ENCODE measurements at regions of chr11 and their contacts with region 1.

Region 1: DNA sequence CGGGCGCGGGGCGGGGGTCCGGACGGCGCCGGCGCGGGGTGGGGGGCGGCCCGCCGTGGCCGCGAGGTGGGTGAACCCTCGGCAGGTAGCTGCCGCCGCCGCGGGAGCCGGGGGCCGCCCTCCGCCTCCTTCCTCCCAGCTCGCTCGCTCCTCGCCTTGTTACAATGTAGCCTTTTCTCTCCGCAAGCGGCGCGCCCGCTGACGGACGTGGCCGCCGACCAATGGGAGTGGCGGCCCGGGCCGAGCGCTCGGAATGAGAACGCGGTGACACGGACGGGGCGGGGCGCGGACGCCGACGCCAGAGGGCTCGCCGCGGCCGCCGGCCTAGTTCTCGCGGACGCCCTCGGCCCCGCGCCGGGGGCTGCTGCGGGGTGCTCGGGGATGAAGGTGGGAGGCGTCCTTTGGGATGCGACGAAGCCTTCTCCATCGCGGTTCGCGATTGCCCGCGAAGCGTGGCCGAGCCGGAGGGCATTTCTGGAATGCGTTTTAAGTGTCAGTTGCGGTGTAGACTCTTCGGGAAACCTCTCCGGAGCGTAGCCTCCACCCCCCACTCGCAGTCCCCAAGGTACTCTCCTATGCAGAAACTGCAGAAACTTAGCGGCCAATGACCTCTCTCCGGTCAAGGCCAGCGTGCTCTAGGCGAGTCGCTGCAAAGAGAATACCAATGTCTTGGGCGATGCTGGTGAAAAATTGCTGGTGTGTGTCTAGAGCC is 734 bp downstream of the PRDM11 start:
- DNase-seq: peak; percentile 85 to 97
- H3K4me3 ChIP-seq: peak overlapping the region; percentile 78
- H3K27ac ChIP-seq: peak overlapping the region; percentile 20; the same call in 1 of the 2 replicates
- H3K4me1 ChIP-seq: peaks cover 13% of the 10 kb centered on the region; the same call in 1 of the 2 replicates
- H3K27me3 ChIP-seq: peaks cover 15% of the 10 kb centered on the region; the same call in 1 of the 2 replicates
- CTCF ChIP-seq: no peak

Region 2: DNA sequence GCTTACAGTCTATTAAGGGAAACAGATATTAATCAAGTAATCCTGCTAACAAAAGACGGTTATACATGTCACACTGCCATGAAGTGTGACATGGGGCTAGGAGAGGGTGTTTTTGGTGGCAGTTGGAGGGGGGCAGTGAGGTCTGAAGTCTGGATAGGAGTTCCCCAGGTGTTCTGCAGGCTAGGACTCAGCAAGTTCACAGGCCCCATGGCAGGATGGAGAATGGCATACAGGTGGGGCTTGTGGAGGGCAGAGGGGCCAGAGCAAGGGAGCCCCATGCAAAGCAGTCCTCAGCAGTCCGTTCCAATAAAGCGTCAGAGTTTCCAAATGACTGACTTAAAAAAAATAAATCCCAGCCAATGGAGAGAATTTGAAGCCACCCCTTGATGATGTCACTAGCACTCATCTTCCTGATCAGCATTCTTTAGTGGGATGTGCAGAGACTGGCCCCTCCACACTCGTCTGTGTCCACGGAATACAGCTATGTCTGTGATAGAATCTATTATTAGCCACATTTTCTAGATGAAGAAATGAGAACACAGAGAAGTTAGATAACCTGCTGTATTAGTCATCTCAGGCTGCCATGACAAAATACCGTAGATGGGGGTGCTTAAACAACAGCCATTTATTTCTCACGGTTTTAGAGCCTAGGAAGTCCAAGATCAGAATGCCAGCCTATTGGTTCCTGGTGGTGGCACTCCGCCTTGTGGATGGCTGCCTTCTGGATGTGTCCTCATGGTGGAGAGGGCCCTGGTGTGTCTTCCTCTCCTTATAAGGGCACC is 31.9 kb after region 1 on chr11:
- CTCF ChIA-PET with region 1: no interaction called
- POLR2A ChIA-PET with region 1: interaction called, 4 read pairs
- intact Hi-C with region 1: loop called (anchors 1 kb)
- DNase-seq: peak in 1 of 2 experiments; percentile 43
- H3K4me3 ChIP-seq: no peak overlapping the region
- H3K27ac ChIP-seq: no peak overlapping the region
- H3K4me1 ChIP-seq: 0 out of 2 replicates have a peak, but pooled peaks cover 8% of the 10 kb centered on the region
- H3K27me3 ChIP-seq: no peaks in the 10 kb centered on the region
- CTCF ChIP-seq: no peak

Region 3: DNA sequence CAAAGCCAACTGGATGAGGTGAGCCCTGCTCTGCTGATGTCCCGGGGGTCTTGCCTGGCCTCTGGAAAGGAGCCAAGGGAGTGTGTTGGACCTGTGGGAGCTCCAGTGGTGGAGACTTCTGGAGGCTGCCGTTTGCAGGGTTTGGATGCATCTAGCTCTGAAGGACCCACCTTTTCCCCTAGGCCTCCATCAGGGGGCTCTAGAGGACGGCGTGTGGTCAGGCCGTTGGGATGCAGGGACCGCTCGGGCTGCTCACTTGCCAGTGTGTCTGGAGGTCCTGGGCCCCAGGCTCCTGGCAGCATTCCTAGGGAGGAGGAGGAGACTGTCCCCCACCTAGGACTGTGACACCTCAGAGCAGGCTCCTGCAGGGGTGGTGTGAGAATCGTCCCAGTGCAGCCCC is 57.6 kb after region 1 on chr11:
- CTCF ChIA-PET with region 1: no interaction called
- POLR2A ChIA-PET with region 1: no interaction called
- intact Hi-C with region 1: no loop called
- DNase-seq: no peak
- H3K4me3 ChIP-seq: no peak overlapping the region
- H3K27ac ChIP-seq: no peak overlapping the region
- H3K4me1 ChIP-seq: no peaks in the 10 kb centered on the region
- H3K27me3 ChIP-seq: peaks cover 15% of the 10 kb centered on the region; the same call in 1 of the 2 replicates
- CTCF ChIP-seq: no peak

Region 4: DNA sequence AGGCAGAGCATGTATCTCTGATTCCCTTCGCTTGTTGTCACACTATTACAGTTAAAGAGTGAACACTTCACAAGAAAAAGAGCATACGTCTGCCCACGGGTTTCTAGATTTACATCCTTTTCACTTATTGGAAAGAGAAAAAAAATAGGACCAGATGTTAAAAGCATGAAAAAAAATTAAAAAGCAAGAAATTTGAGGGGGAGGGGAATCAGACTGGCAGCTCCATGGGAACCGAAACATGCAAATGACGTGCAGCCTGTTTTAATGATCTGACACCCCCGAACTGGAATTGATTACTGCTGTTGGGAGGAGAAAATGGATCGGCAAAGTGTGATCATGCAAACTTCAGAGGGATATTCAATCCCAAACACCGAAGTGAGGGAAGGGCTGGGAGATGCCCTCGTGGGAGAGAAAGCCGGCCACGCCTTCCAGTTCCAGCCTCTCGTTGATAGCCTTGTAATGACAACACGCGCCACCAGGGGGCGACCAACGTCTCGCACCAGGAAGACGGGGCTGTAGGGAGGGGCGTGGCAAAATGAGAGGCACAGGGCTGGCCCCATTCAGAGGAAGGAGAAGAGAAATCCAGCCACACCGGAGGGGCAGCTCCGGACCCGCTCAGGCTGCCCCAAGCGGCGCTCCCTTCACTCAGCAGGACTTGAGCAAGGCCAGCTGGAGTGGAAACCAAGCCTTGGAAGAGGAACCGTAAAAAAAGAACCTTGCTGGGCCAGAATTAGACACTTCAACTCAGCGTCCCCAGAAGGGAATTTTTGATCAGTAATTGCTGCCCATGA is 192.8 kb after region 1 on chr11:
- CTCF ChIA-PET with region 1: interaction called, 10 read pairs
- POLR2A ChIA-PET with region 1: no interaction called
- intact Hi-C with region 1: no loop called
- DNase-seq: peak; percentile 53 to 83
- H3K4me3 ChIP-seq: no peak overlapping the region
- H3K27ac ChIP-seq: no peak overlapping the region
- H3K4me1 ChIP-seq: no peaks in the 10 kb centered on the region
- H3K27me3 ChIP-seq: peaks cover 83% of the 10 kb centered on the region
- CTCF ChIP-seq: peak; percentile 88